ENCODE measurements at regions of chr16 and their contacts with region 1.

Region 1: GRCh38 chr16:81551821-81552304 is 107.3 kb downstream of the CMIP start:
- DNase-seq: no peak
- ATAC-seq: no peak
- H3K4me3 ChIP-seq: no peak overlapping the region
- H3K27ac ChIP-seq: peak overlapping the region; percentile 58
- H3K4me1 ChIP-seq: peaks cover 84% of the 10 kb centered on the region
- H3K27me3 ChIP-seq: no peaks in the 10 kb centered on the region
- CTCF ChIP-seq: no peak
- EP300 ChIP-seq: no peak
- POLR2A ChIP-seq: no peak
- RAD21 ChIP-seq: no peak

Region 2: GRCh38 chr16:81293909-81294823 is 257.7 kb before region 1 on chr16:
- CTCF ChIA-PET with region 1: no interaction called
- POLR2A ChIA-PET with region 1: no interaction called
- in situ Hi-C with region 1: no loop called
- intact Hi-C with region 1: no loop called
- DNase-seq: no peak
- ATAC-seq: no peak
- H3K4me3 ChIP-seq: no peak overlapping the region
- H3K27ac ChIP-seq: no peak overlapping the region
- H3K4me1 ChIP-seq: no peaks in the 10 kb centered on the region
- H3K27me3 ChIP-seq: peaks cover 1 to 22% of the 10 kb centered on the region in 2 experiments; a peak in 3 of 5 replicates
- CTCF ChIP-seq: no peak
- EP300 ChIP-seq: no peak
- POLR2A ChIP-seq: no peak
- RAD21 ChIP-seq: no peak

Region 3: DNA sequence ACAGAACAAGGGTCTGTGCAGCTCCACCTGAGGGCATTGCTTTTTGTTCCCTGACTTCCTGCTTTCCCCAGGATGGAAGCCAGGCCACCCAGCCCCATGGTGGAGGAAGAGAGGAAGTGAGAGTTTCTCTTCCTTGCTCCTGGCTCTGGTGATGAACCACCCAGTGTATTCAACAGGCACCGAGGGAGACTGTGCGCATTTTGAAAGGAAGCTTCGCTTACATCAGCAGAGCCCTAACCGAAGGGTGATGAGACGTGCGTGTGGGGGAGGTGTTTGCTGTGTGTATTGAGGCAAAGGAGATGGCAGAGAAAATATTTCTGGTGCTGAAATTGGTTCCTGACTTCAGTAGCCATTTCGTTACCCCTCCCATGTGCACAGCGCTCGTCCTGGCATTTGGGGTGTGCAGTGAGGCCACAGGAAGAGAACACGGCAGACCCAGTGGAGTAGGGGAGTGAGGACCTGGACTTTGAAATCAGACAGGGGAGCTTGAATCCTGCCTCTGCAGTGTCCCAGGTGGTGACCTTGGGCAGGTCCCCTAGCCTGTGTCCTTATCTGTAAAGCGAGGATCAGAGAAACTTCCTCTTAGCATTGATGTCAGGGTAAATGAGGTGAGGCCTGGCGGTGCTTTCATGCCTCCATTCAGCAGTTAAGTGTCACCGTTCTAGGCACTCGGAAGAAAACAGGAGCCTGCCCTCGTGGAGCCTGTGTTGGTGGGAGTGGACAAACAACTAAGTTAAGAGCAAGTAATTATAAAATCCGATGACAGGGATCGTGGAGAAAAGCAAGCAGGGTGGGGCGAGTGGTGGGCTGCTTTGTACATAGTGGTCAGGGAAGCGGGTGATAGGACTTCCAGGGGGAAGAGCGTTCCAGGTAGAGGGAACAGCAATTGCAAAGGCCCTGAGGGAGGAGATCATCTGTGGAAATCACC is 99.8 kb before region 1 on chr16:
- CTCF ChIA-PET with region 1: no interaction called
- POLR2A ChIA-PET with region 1: interaction called, 21 read pairs
- in situ Hi-C with region 1: no loop called
- intact Hi-C with region 1: loop called (anchors 1 kb)
- DNase-seq: peak; percentile 99
- ATAC-seq: peak; percentile 72
- H3K4me3 ChIP-seq: peak overlapping the region; percentile 29 to 62 (median 30); a peak in 5 of 6 replicates
- H3K27ac ChIP-seq: peak overlapping the region; percentile 89
- H3K4me1 ChIP-seq: peaks cover 84% of the 10 kb centered on the region
- H3K27me3 ChIP-seq: no peaks in the 10 kb centered on the region; a peak in 1 of 5 replicates
- CTCF ChIP-seq: peak; percentile 63
- EP300 ChIP-seq: peak; percentile 73 to 96; a peak in 3 of 4 replicates
- POLR2A ChIP-seq: peak; percentile 73 to 89; a peak in 3 of 4 replicates
- RAD21 ChIP-seq: peak; percentile 57; the same call in 1 of the 2 replicates

Region 4: GRCh38 chr16:81481207-81481821 is 70.5 kb before region 1 on chr16:
- CTCF ChIA-PET with region 1: no interaction called
- POLR2A ChIA-PET with region 1: interaction called, 11 read pairs
- in situ Hi-C with region 1: no loop called
- intact Hi-C with region 1: no loop called
- DNase-seq: peak; percentile 94
- ATAC-seq: peak; percentile 87
- H3K4me3 ChIP-seq: peak overlapping the region in 1 of 3 experiments; percentile 32; a peak in 2 of 6 replicates
- H3K27ac ChIP-seq: peak overlapping the region; percentile 60
- H3K4me1 ChIP-seq: peaks cover 79% of the 10 kb centered on the region
- H3K27me3 ChIP-seq: no peaks in the 10 kb centered on the region
- CTCF ChIP-seq: peak; percentile 55
- EP300 ChIP-seq: peak; percentile 67 to 84
- POLR2A ChIP-seq: peak in 1 of 2 experiments; percentile 25; a peak in 2 of 4 replicates
- RAD21 ChIP-seq: peak; percentile 53; the same call in 1 of the 2 replicates

Region 5: GRCh38 chr16:81567987-81568748 is 16.3 kb after region 1 on chr16:
- CTCF ChIA-PET with region 1: no interaction called
- POLR2A ChIA-PET with region 1: interaction called, 8 read pairs
- in situ Hi-C with region 1: no loop called
- intact Hi-C with region 1: loop called (anchors 1 kb)
- DNase-seq: peak; percentile 74
- ATAC-seq: peak; percentile 58
- H3K4me3 ChIP-seq: no peak overlapping the region; a peak in 1 of 6 replicates
- H3K27ac ChIP-seq: peak overlapping the region; percentile 25
- H3K4me1 ChIP-seq: peaks cover 66% of the 10 kb centered on the region
- H3K27me3 ChIP-seq: no peaks in the 10 kb centered on the region
- CTCF ChIP-seq: no peak
- EP300 ChIP-seq: no peak; a peak in 1 of 4 replicates
- POLR2A ChIP-seq: no peak
- RAD21 ChIP-seq: no peak